ENCODE measurements at regions of chr12 and their contacts with region 1.

Region 1: DNA sequence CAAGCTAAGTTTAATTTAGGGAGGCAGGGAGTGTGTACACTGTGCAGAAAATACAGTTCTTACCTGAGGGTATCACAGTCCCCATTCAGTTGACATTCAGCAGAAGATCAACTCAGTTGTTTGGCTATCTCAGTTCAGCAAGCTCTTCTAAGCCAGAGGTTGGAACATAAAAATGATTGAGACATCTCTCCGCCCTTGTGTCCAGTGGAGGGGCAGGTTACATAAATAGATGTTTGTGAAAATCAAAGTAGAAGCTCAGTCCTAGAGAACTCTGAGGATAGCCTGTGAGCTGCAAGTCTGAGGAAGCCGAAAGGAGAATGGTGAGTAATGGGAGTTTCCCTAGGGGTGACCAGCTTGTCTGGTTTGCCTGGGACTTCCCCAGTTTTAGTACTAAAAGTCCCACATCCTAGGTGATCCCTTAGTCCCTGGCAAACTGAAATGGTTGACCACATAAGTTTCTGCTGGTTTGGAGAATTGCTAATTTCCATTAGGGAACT is 251.4 kb upstream of the ATP2B1 start:
- DNase-seq: peak; percentile 63
- H3K4me3 Mint-ChIP-seq: peak overlapping the region; percentile 39
- H3K27ac Mint-ChIP-seq: no peak overlapping the region
- H3K4me1 Mint-ChIP-seq: peaks cover 12% of the 10 kb centered on the region
- H3K27me3 Mint-ChIP-seq: peaks cover 10% of the 10 kb centered on the region

Region 2: GRCh38 chr12:89542912-89543592 is 417.0 kb before region 1 on chr12:
- intact Hi-C with region 1: loop called (anchors 1 kb)
- DNase-seq: peak; percentile 88
- H3K4me3 Mint-ChIP-seq: no peak overlapping the region
- H3K27ac Mint-ChIP-seq: no peak overlapping the region
- H3K4me1 Mint-ChIP-seq: peaks cover 5% of the 10 kb centered on the region
- H3K27me3 Mint-ChIP-seq: no peaks in the 10 kb centered on the region

Region 3: DNA sequence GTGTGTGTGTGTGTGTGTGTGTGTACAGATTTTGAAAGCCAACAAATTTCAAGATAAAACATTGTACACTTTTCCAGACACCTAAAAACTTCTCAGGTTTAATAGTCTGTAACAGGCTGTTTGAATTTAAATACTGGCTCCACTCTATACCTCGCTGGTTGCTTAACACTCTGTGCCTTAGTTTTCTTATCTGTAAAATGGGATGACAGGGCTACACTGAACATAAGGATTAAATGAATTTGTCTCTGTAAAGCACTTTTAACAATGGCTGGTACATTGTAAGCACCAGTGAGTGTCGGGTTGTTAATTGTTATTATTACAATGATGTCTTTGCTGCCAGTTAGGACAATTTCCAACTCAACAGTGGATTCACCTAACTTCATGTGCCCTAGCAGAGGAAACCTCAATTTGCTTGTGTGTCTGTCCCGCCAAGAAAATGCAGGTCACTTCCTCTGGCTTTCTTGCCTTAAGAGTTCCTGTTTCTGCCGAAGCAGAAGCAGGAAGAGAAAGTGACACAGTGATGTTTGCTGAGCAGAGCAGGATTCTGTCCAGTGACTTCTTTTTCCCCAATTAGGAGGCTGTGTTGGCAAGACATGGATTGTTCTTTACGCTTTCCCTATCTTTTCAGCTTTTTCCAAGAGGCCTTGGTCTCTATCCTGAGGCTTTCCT is 97.4 kb before region 1 on chr12:
- intact Hi-C with region 1: loop called (anchors 2 kb)
- DNase-seq: peak; percentile 86
- H3K4me3 Mint-ChIP-seq: peak overlapping the region; percentile 84
- H3K27ac Mint-ChIP-seq: peak overlapping the region; percentile 97
- H3K4me1 Mint-ChIP-seq: peaks cover 42% of the 10 kb centered on the region
- H3K27me3 Mint-ChIP-seq: no peaks in the 10 kb centered on the region

Region 4: GRCh38 chr12:89949457-89950195 is 10.4 kb before region 1 on chr12:
- intact Hi-C with region 1: loop called (anchors 1 kb)
- DNase-seq: peak; percentile 86
- H3K4me3 Mint-ChIP-seq: peak overlapping the region; percentile 1
- H3K27ac Mint-ChIP-seq: peak overlapping the region; percentile 4
- H3K4me1 Mint-ChIP-seq: peaks cover 19% of the 10 kb centered on the region
- H3K27me3 Mint-ChIP-seq: peaks cover 2% of the 10 kb centered on the region

Region 5: DNA sequence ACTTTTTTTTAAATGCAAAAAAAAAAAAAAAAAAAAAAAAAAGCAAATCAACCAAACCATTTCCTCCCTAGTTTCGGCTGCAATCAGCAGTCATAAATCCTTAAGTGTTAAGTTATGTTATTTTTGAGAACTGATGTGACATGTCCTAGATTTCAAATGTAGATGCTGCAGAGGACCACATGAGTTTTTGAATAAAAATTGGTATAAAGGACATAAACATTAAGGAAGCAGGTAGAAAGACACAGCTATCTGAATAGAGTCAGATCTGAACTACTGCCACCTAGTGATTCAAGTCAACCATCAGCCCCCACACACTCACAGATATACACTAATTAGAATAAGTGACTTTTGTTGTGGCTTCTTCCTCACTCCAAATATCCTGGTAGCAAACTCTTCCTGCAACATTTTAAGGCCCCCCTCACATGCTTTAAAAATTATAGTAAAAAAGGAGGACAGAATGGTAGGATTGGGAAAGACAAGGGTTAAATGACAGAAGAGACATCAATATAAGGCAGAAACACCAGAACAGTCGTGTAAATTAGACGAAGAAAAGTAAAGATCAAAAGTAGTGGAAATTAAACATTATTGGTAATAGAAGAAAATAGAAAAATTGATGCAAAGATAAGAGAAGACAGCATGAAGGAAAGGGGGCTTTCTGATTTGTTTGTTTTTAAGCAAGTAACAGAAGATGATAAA is 143.0 kb after region 1 on chr12:
- intact Hi-C with region 1: loop called (anchors 5 kb)
- DNase-seq: peak; percentile 64
- H3K4me3 Mint-ChIP-seq: no peak overlapping the region
- H3K27ac Mint-ChIP-seq: no peak overlapping the region
- H3K4me1 Mint-ChIP-seq: peaks cover 5% of the 10 kb centered on the region
- H3K27me3 Mint-ChIP-seq: peaks cover 14% of the 10 kb centered on the region

Region 6: DNA sequence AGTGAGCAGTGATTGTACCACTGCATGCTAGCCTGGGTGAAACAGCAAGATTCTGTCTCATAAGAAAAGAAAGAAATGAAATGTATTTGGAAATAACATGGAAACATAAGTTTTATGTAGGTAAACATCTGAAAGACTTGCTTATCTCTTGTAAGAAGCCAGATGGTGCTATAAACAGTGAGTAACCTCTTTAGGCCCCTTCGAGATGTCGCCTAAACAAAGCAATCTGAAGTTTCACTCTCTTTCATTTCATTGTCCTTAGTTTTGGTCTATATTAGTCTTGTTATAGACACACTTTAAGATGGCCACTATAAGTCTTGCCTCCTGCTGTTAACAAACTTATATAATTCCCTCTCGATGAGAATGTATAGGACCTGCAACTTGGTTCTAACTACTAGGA is 221.2 kb after region 1 on chr12:
- intact Hi-C with region 1: no loop called
- DNase-seq: no peak
- H3K4me3 Mint-ChIP-seq: no peak overlapping the region
- H3K27ac Mint-ChIP-seq: no peak overlapping the region
- H3K4me1 Mint-ChIP-seq: no peaks in the 10 kb centered on the region
- H3K27me3 Mint-ChIP-seq: no peaks in the 10 kb centered on the region

Measured in activated CD4-positive, alpha-beta T cell treated with anti-CD3 and anti-CD28 coated beads, Interleukin-2, amount 10 ng/mL, durations not matched to agents 24 days and 14 days (primary cell).